ENCODE measurements at regions of chr5 and their contacts with region 1.

Region 1: DNA sequence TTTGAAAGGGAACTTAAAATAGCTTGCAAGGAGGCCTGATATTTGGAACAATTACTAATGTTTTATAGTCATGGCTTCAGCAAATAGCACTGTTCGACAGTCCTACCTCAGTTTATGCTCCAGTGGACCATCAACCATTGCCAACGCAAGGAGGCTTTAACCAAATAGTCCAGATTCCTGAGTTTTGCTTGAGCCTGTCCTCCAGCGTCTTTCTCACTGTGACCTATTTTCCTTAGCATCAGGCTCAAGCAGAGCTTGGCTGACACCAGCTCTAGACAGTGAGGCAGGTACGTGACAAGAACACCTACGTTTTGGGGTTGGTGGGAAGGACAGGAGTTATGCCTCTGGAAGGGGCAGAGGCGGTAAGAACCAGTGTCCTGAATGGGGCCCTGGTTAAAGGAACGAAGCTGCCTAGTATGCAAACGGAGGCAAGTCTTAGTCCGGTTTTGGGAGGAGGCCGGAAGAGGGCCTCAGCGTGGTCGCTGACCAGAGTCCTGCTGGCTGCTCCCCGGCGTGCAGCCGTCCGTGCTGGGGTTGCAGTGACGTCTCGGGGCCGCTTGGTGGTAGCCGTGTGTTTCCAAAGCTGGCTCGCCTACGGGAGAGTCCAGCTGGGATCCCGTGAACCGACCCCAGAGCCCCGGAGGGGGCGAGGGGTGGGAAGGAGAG is 998 bp upstream of the FGF18 start:
- DNase-seq: peak; percentile 80
- ATAC-seq: peak; percentile 63
- H3K4me3 Mint-ChIP-seq: peak overlapping the region; percentile 58
- H3K27ac Mint-ChIP-seq: no peak overlapping the region
- H3K4me1 Mint-ChIP-seq: peaks cover 12% of the 10 kb centered on the region
- H3K27me3 Mint-ChIP-seq: peaks cover 22% of the 10 kb centered on the region

Region 2: DNA sequence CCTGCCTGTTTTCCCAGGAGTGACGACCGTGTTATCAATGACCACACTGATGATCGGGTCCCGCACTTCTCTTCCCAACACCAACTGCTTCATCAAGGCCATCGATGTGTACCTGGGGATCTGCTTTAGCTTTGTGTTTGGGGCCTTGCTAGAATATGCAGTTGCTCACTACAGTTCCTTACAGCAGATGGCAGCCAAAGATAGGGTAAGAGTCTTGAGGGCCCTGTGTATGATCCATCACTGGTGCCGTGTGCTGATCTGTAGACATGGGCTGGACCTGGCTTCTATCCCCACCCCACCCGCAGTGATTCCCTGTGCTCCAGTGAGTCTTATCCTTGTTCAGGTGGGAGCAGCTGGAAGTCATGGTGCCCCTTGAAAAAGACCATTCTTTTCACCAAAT is 608.9 kb before region 1 on chr5:
- CTCF ChIA-PET with region 1: no interaction called
- POLR2A ChIA-PET with region 1: no interaction called
- intact Hi-C with region 1: no loop called
- DNase-seq: no peak
- ATAC-seq: no peak
- H3K4me3 Mint-ChIP-seq: no peak overlapping the region
- H3K27ac Mint-ChIP-seq: no peak overlapping the region
- H3K4me1 Mint-ChIP-seq: no peaks in the 10 kb centered on the region
- H3K27me3 Mint-ChIP-seq: peaks cover 17% of the 10 kb centered on the region

Region 3: DNA sequence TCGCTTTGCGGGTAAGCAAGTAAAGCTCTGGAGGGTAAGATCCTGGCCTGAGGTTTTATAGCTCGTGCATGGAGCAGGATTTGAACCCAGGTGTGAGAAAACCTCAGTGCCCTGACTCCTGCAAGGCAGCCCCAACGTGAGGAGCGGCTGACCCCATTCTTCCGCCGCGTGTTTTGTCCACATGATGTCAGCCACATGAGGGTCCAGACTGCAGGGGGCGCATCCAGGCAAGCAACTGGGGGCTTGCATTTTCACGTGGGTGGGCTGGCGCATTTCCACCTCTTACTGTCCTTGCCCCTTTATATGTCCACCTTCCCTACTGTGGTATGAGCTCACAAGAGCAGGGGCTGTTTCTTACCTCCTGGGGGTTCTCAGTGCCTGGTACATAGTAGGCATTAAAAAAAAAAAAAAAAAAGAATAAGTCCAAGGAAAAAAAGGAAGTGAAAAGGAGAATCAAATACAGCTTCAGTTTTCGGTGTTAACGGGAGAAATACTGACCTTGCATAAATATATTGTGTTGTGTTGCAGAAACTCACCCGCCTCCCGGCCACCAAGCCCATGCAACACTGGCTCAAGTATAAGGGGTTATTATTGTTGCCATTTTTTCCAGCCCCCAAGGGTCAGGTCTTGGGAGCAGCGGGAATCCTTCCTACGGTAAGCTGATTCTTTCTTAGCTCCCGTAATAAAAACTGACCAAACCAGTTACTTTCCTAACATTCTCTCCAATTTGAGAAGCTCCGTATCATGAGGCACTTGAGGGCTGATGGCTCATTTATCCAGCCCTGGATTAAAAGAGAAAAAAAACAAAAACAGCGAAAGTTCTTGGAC is 94.4 kb before region 1 on chr5:
- CTCF ChIA-PET with region 1: no interaction called
- POLR2A ChIA-PET with region 1: no interaction called
- intact Hi-C with region 1: no loop called
- DNase-seq: no peak
- ATAC-seq: no peak
- H3K4me3 Mint-ChIP-seq: no peak overlapping the region
- H3K27ac Mint-ChIP-seq: no peak overlapping the region
- H3K4me1 Mint-ChIP-seq: no peaks in the 10 kb centered on the region
- H3K27me3 Mint-ChIP-seq: peaks cover 54% of the 10 kb centered on the region

Region 4: DNA sequence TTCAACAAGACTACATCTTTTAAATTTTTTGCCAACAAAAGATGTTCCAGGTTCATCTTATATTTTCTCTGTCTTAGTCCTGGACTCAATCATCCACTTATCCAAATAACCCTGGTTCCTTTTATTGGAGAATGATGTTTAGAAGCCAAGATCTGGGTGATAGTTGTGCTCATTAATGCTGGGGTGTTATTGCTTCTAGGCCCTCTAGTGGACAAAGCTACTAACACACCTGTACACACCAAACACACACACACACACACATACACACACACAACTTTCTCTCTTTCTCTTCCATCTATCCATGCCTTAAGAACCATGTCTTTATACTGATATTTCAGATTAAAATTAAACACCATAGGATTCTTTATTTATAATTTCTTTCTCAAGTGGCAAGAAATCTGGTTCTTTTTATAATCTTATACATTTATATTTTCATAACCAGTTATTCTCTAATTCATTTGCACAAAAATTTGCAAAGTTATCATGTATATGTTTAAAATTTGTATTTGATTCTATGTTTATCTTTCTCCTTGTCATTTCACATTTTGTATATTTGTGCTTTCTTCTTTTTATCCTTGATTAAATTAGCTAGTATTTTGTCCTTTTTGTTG is 188.1 kb after region 1 on chr5:
- CTCF ChIA-PET with region 1: interaction called, 4 read pairs
- POLR2A ChIA-PET with region 1: no interaction called
- intact Hi-C with region 1: loop called in 1 of 2 experiments (anchors 2 kb)
- DNase-seq: no peak
- ATAC-seq: no peak
- H3K4me3 Mint-ChIP-seq: no peak overlapping the region
- H3K27ac Mint-ChIP-seq: no peak overlapping the region
- H3K4me1 Mint-ChIP-seq: peaks cover 2% of the 10 kb centered on the region
- H3K27me3 Mint-ChIP-seq: peaks cover 30% of the 10 kb centered on the region

Region 5: GRCh38 chr5:171850324-171851285 is 432.2 kb after region 1 on chr5:
- CTCF ChIA-PET with region 1: no interaction called
- POLR2A ChIA-PET with region 1: no interaction called
- intact Hi-C with region 1: loop called in 1 of 2 experiments (anchors 5 kb)
- DNase-seq: no peak
- ATAC-seq: no peak
- H3K4me3 Mint-ChIP-seq: no peak overlapping the region
- H3K27ac Mint-ChIP-seq: no peak overlapping the region
- H3K4me1 Mint-ChIP-seq: peaks cover under 1% of the 10 kb centered on the region
- H3K27me3 Mint-ChIP-seq: no peaks in the 10 kb centered on the region

Region 6: DNA sequence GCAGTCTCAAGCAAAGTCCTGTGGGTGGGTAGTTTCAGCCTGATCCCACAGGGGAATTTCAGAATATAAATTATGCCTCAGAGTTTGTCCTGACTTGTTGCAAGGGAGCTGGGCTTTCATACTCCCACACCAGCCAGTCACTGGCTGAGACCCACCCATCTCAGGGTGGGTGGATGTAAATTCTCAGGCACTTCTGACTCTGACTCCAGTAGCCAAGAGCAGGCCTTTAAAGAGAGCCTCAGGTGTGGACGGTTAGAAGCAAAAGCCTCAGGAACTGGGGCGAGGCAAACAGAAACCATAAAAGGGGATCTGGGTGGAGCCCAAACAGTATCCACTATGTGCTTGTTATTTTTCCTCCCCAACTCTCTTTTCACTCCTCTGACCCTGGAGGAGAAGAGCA is 616.6 kb after region 1 on chr5:
- CTCF ChIA-PET with region 1: interaction called, 8 read pairs
- POLR2A ChIA-PET with region 1: no interaction called
- intact Hi-C with region 1: loop called (anchors 1 kb)
- DNase-seq: peak; percentile 26
- ATAC-seq: peak; percentile 70
- H3K4me3 Mint-ChIP-seq: no peak overlapping the region
- H3K27ac Mint-ChIP-seq: no peak overlapping the region
- H3K4me1 Mint-ChIP-seq: peaks cover 14% of the 10 kb centered on the region
- H3K27me3 Mint-ChIP-seq: no peaks in the 10 kb centered on the region